Naive thymus-derived CD4-positive, alpha-beta T cell (primary cell): ENCODE measurements at regions of chr17 and their contacts with region 1.

Region 1: DNA sequence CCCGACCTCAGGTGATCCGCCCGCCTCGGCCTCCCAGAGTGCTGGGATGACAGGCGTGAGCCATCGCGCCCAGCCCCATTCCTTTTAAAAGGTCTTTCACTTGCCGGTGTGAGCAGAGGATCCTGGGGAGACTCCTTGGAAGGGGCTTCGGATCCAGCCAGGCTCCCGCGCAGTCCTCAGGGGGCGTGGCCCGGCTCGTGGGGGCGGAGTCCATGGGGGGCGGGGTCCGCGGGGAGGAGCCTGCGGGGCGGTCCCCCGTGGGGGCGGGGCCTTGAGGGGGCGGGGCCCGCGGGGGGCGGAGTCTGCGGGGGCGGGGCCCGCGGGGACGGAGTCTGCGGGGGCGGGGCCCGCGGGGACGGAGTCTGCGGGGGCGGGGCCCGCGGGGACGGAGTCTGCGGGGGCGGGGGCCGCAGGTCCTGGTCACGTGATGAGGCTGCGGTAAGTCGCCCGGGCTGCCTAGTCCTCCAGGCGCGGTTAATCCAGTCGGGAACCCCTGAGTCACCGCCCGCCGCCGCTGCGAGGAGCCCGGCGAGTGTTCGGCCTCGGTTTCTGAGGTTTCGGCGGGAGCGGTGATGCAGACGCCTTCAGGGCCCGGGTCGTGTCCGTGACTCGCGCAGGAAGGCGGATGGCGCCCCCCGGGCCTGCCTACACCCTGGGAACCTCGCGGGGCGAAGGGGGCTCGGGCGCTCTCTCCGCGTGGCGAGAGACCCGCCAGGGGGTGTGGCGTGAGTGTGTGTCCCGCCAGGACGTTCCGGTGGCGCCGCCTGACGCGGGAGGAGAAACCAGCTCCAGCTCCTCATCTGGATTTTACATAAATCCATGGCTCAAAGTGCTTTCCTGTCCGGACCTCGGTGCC is 23.6 kb upstream of the ABR start:
- DNase-seq: peak in 7 of 9 donors; percentile 25 to 69 (median 48)
- ATAC-seq: peak; percentile 89
- H3K4me3 ChIP-seq: no peak overlapping the region
- H3K4me3 Mint-ChIP-seq: peak overlapping the region in 4 of 10 donors; percentile 11 to 76 (median 12)
- H3K27ac ChIP-seq: no peak overlapping the region
- H3K27ac Mint-ChIP-seq: no peak overlapping the region
- H3K4me1 ChIP-seq: peaks cover 13 to 43% of the 10 kb centered on the region in 2 donors
- H3K4me1 Mint-ChIP-seq: peaks cover 25 to 34% (median 29%) of the 10 kb centered on the region in 7 donors
- H3K27me3 ChIP-seq: no peaks in the 10 kb centered on the region
- H3K27me3 Mint-ChIP-seq: no peaks in the 10 kb centered on the region

Region 2: DNA sequence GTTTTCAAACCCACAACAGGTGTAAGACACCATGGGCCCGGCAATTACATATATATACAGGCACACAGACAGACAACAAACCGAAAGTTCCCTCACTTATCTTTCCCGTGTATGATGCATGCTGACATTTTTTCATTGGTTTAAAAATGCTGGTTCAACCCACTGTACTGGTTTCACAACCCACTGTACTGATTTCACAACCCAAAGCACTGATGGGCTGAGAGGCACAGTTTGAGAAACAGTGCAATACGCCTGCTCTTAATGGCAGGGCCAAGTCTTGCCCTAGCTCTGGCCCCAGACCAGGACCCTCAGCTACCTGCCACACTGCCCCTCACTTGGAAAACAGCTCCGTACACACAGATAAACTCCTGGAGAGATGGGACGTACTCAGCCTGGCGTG is 105.0 kb before region 1 on chr17:
- CTCF ChIA-PET with region 1: no interaction called
- POLR2A ChIA-PET with region 1: no interaction called
- intact Hi-C with region 1: no loop called
- DNase-seq: no peak
- ATAC-seq: peak; percentile 60
- H3K4me3 ChIP-seq: no peak overlapping the region
- H3K4me3 Mint-ChIP-seq: no peak overlapping the region
- H3K27ac ChIP-seq: no peak overlapping the region
- H3K27ac Mint-ChIP-seq: peak overlapping the region in 4 of 9 donors; percentile 28 to 64 (median 56)
- H3K4me1 ChIP-seq: peaks cover 0 to 15% of the 10 kb centered on the region in 2 donors
- H3K4me1 Mint-ChIP-seq: peaks cover 17 to 40% (median 36%) of the 10 kb centered on the region in 7 donors
- H3K27me3 ChIP-seq: no peaks in the 10 kb centered on the region
- H3K27me3 Mint-ChIP-seq: no peaks in the 10 kb centered on the region

Region 3: DNA sequence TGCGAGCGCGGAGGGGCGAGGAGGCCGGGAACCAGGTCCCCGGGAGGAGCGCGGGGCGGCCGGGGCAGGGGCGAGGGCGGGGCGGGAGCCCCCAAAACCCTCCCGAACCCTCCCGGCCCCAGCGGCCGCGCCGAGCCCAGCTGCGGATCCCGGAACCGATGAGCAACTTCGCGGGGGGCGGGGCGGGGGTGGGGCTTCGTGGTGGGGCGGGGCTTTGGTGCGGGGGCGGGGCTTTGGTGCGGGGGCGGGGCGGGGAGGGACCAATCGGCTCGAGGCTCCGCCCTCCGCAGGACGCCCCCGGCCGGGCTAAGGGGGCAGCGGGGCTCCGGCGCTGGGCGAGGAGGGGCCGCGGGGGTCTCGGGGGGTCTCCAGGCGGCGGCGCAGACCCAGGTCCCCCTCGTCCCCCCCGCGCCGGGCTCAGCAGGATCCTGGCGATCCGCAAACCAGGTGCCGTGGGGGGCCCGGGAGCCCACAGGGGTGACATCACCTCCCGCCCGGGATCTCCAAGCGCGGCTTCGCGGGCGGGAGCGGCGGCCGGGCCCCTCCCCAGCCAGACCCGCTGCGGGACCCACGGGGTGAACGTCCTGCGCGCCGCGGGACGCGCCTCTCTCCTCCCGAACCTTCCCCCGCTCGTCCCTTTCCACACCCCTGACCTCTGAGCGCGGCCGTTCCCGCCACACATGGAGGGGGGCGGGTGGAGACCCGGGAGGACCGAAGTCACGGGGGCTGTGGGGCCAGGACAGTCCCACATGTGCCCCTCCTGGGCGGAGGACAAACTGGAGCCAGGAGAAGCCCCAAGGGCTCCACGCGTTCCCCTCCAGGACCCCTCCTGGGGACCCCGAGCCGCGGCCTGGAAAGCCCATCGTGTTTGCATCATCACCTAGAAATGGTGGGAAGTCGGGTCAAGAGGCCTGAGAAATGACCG is 23.3 kb before region 1 on chr17 and contains the start of gene ABR:
- CTCF ChIA-PET with region 1: interaction called, 11 read pairs
- POLR2A ChIA-PET with region 1: interaction called, 7 read pairs
- intact Hi-C with region 1: loop called in 1 of 2 experiments (anchors 2 kb)
- DNase-seq: peak in 8 of 9 donors; percentile 40 to 65 (median 52)
- ATAC-seq: peak; percentile 84
- H3K4me3 ChIP-seq: peak within 1 kb of the TSS; percentile 51
- H3K4me3 Mint-ChIP-seq: peak within 1 kb of the TSS; percentile 58 to 86 (median 74)
- H3K27ac ChIP-seq: peak within 1 kb of the TSS; percentile 64
- H3K27ac Mint-ChIP-seq: peak within 1 kb of the TSS in 4 of 9 donors; percentile 21 to 59 (median 40)
- H3K4me1 ChIP-seq: peaks cover 3 to 5% of the 10 kb centered on the region in 2 donors
- H3K4me1 Mint-ChIP-seq: peaks cover 0 to 10% (median 4%) of the 10 kb centered on the region in 7 donors
- H3K27me3 ChIP-seq: no peaks in the 10 kb centered on the region
- H3K27me3 Mint-ChIP-seq: peaks cover 0 to 33% (median 0%) of the 10 kb centered on the region in 5 donors
- total RNA-seq, gene ABR: 85.3 to 152 (median 140) TPM